Motor neuron (in vitro differentiated cells): ENCODE measurements at regions of chr5 and their contacts with region 1.

Region 1: DNA sequence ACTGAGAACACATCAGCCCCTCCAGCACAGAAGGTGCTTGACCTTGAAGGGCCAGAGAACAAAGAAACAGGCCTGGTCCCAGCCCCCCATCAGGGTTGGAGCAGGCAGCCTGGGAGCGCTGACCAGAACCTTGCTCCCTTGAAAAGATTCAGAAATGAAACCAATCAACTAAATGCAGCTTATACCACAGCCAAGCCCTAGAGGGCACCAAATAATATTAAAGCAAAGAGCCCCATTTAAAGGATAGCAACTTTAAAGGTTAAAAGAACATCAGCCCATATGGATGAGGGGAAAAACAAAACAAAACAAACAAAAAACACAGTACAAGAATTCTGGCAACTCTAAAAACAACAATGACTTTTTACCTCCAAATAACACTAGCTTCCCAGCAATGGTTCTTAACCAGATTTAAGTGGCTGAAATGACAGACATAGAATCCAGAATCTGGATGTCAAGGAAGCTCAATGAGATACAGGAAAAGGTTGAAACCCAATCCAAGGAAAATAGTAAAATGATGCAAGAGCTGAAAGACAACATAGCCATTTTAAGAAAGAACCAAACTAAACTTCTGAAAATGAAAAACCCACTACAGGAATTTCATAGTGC is 471.9 kb downstream of the MTRR start:
- ATAC-seq: peak in 3 of 8 experiments; percentile 78 to 84 (median 81)
- H3K4me3 ChIP-seq: no peak overlapping the region
- H3K27ac ChIP-seq: no peak overlapping the region
- H3K4me1 ChIP-seq: no peaks in the 10 kb centered on the region

Region 2: DNA sequence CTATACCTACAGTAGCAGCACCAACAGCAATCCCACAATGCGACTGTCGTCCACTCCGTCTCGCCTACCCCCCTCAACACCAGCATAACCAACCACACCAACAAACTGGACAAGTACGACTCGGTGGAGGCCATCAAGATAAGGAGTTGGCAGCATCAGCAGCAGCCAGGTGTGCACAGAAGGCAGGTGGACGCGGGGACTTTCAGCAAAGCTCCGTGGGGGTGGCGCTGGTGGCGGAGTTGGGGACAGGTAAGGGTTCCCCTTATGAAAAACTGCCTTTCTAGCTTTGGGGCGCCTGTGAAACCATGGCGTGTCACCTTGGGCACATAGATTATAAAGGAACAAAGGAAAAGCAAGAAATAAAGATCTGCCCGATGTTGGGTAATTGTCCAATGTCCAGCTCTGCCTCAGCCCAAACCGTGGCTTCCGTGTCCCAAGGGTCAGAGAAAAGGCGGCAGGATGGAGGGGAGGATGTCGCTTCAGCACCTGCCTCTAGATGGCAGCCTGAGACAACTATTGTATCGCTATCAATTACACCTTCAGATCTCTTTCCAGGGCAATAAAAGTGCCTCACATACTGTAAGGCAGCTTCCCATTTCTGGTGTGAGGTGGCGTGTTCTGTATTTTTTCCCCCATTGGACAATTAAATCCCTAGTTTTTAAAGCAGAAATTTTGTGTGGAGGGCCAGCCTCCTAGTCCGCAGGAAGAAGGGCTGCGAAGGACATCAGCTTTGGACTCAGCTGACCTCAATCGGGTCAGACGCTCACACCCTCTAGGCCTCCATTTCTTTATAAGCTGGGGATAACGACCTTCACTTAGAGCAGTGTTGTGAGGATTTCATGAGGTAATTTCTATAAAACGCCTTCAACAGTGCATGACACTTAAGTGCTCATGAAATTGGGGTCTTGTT is 413.1 kb before region 1 on chr5:
- in situ Hi-C with region 1: loop called in 1 of 9 experiments (anchors 25 kb)
- ATAC-seq: peak; percentile 78 to 90 (median 84)
- H3K4me3 ChIP-seq: no peak overlapping the region
- H3K27ac ChIP-seq: no peak overlapping the region
- H3K4me1 ChIP-seq: peaks cover 0 to 9% of the 10 kb centered on the region in 2 donors